Caco-2 (cell line): ENCODE measurements at regions of chr4 and their contacts with region 1.

Region 1: GRCh38 chr4:47195706-47196105 is 164.3 kb downstream of the GABRB1 start:
- DNase-seq: no peak
- H3K4me3 ChIP-seq: no peak overlapping the region
- H3K4me3 Mint-ChIP-seq: no peak overlapping the region
- H3K27ac Mint-ChIP-seq: no peak overlapping the region
- H3K4me1 ChIP-seq: peaks cover 11% of the 10 kb centered on the region
- H3K4me1 Mint-ChIP-seq: peaks cover 1% of the 10 kb centered on the region
- H3K27me3 ChIP-seq: no peaks in the 10 kb centered on the region
- H3K27me3 Mint-ChIP-seq: no peaks in the 10 kb centered on the region
- CTCF ChIP-seq: no peak

Region 2: GRCh38 chr4:47221721-47222120 is 26.0 kb after region 1 on chr4:
- CTCF ChIA-PET with region 1: no interaction called
- POLR2A ChIA-PET with region 1: no interaction called
- intact Hi-C with region 1: loop called (anchors 1 kb)
- DNase-seq: no peak
- H3K4me3 ChIP-seq: no peak overlapping the region
- H3K4me3 Mint-ChIP-seq: no peak overlapping the region
- H3K27ac Mint-ChIP-seq: no peak overlapping the region
- H3K4me1 ChIP-seq: peaks cover 38% of the 10 kb centered on the region
- H3K4me1 Mint-ChIP-seq: peaks cover 36% of the 10 kb centered on the region
- H3K27me3 ChIP-seq: no peaks in the 10 kb centered on the region
- H3K27me3 Mint-ChIP-seq: no peaks in the 10 kb centered on the region
- CTCF ChIP-seq: no peak

Region 3: DNA sequence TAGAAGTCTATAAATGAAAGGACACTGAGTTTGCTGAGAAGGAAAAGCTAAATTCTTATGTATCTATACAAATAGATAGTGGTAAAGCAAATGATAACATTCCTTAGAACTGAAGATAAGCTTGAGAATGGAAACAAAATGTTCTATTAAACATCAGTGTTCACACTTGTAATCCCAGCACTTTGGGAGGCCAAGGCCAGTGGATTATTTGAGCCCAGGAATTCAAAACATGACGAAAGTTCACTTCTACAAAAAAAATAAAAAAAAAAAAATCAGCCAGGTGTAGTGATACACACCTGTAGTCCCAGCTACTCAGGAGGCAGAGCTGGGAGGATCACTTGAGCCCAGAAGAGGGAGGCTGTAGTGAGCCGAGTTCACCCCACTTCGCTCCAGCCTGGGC is 68.0 kb after region 1 on chr4:
- CTCF ChIA-PET with region 1: no interaction called
- POLR2A ChIA-PET with region 1: no interaction called
- intact Hi-C with region 1: loop called (anchors 1 kb)
- DNase-seq: peak; percentile 53 to 59
- H3K4me3 ChIP-seq: no peak overlapping the region
- H3K4me3 Mint-ChIP-seq: peak overlapping the region; percentile 15
- H3K27ac Mint-ChIP-seq: peak overlapping the region; percentile 11
- H3K4me1 ChIP-seq: peaks cover 13% of the 10 kb centered on the region
- H3K4me1 Mint-ChIP-seq: peaks cover 26% of the 10 kb centered on the region
- H3K27me3 ChIP-seq: no peaks in the 10 kb centered on the region
- H3K27me3 Mint-ChIP-seq: no peaks in the 10 kb centered on the region
- CTCF ChIP-seq: no peak

Region 4: DNA sequence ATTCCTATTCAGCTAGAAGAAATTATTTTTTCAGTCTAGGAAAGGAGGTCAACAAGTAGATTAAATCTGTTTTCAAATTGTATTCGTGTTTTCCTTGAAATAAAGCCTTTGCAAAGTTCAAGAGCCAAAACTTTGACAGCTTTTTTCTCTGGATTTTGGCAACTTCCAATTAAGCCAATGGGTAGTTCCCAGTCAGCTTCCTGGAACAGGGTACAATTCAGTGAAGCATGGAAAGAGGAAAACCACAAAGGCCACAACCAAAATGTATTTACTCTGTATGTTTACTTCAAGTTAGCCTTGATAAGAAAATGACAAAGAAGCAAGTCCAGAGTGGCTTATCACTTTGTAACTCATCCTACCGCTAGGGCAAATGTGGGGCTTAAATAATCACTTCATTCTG is 79.2 kb after region 1 on chr4:
- CTCF ChIA-PET with region 1: no interaction called
- POLR2A ChIA-PET with region 1: no interaction called
- intact Hi-C with region 1: loop called (anchors 1 kb)
- DNase-seq: peak in 1 of 2 experiments; percentile 18
- H3K4me3 ChIP-seq: no peak overlapping the region
- H3K4me3 Mint-ChIP-seq: no peak overlapping the region
- H3K27ac Mint-ChIP-seq: no peak overlapping the region
- H3K4me1 ChIP-seq: peaks cover 16% of the 10 kb centered on the region
- H3K4me1 Mint-ChIP-seq: peaks cover 7% of the 10 kb centered on the region
- H3K27me3 ChIP-seq: no peaks in the 10 kb centered on the region
- H3K27me3 Mint-ChIP-seq: no peaks in the 10 kb centered on the region
- CTCF ChIP-seq: no peak

Region 5: GRCh38 chr4:47427935-47428334 is 232.2 kb after region 1 on chr4:
- CTCF ChIA-PET with region 1: no interaction called
- POLR2A ChIA-PET with region 1: no interaction called
- intact Hi-C with region 1: loop called (anchors 1 kb)
- DNase-seq: no peak
- H3K4me3 ChIP-seq: no peak overlapping the region
- H3K4me3 Mint-ChIP-seq: no peak overlapping the region
- H3K27ac Mint-ChIP-seq: no peak overlapping the region
- H3K4me1 ChIP-seq: peaks cover 11% of the 10 kb centered on the region
- H3K4me1 Mint-ChIP-seq: peaks cover 9% of the 10 kb centered on the region
- H3K27me3 ChIP-seq: no peaks in the 10 kb centered on the region
- H3K27me3 Mint-ChIP-seq: no peaks in the 10 kb centered on the region
- CTCF ChIP-seq: no peak